ENCODE measurements at regions of chr17 and their contacts with region 1.

Region 1: DNA sequence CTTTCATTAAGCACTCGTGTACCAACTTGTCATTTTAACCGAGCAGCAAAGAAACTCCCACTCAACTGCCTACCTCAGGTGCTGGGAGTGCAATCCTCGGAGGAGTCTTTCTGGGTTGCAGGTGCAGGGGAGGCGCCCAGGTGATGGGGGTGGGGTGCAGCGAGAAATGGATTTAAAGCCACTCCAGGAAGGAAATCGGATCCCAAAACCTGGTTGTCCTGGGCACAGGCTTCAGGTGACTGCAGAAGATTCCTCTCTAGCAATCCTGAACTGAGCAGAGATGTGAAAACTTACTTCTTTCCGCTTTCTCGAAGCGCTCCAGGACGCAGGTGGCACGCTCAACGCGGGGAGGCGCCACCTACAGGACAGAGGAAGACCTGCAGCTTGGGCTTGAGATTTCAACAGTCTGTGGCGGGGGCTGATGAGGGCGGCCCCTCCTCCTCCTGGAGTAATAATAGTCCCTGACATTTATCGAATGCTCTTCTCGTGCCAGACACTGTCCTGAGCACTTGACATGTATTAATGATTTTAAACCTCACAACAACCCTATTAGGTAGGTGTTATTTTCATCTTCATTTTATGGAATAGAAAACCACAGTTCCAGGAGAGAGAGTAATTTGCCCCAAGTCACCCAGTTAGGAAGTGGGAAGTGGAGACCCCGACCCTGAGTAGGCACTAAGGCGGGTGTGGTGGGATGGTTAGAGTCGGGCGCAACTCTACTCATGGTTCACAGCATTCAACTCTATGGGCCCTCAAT is 27.2 kb upstream of the SKAP1 start:
- DNase-seq: peak; percentile 49 to 90 (median 75)
- ATAC-seq: peak; percentile 85
- H3K4me3 ChIP-seq: peak overlapping the region; percentile 21 to 28
- H3K4me3 Mint-ChIP-seq: peak overlapping the region; percentile 73
- H3K27ac ChIP-seq: no peak overlapping the region
- H3K27ac Mint-ChIP-seq: peak overlapping the region; percentile 22
- H3K4me1 ChIP-seq: peaks cover 53% of the 10 kb centered on the region
- H3K4me1 Mint-ChIP-seq: peaks cover 52% of the 10 kb centered on the region
- H3K27me3 ChIP-seq: no peaks in the 10 kb centered on the region
- H3K27me3 Mint-ChIP-seq: no peaks in the 10 kb centered on the region
- CTCF ChIP-seq: peak; percentile 94

Region 2: GRCh38 chr17:48335858-48336500 is 121.3 kb before region 1 on chr17:
- CTCF ChIA-PET with region 1: interaction called, 17 read pairs
- POLR2A ChIA-PET with region 1: interaction called, 3 read pairs
- intact Hi-C with region 1: loop called (anchors 1 to 5 kb)
- DNase-seq: peak in 2 of 9 experiments; percentile 68 to 76
- ATAC-seq: peak; percentile 67
- H3K4me3 ChIP-seq: no peak overlapping the region
- H3K4me3 Mint-ChIP-seq: no peak overlapping the region
- H3K27ac ChIP-seq: no peak overlapping the region
- H3K27ac Mint-ChIP-seq: no peak overlapping the region
- H3K4me1 ChIP-seq: no peaks in the 10 kb centered on the region
- H3K4me1 Mint-ChIP-seq: peaks cover 9% of the 10 kb centered on the region
- H3K27me3 ChIP-seq: no peaks in the 10 kb centered on the region
- H3K27me3 Mint-ChIP-seq: no peaks in the 10 kb centered on the region
- CTCF ChIP-seq: peak; percentile 65

Region 3: DNA sequence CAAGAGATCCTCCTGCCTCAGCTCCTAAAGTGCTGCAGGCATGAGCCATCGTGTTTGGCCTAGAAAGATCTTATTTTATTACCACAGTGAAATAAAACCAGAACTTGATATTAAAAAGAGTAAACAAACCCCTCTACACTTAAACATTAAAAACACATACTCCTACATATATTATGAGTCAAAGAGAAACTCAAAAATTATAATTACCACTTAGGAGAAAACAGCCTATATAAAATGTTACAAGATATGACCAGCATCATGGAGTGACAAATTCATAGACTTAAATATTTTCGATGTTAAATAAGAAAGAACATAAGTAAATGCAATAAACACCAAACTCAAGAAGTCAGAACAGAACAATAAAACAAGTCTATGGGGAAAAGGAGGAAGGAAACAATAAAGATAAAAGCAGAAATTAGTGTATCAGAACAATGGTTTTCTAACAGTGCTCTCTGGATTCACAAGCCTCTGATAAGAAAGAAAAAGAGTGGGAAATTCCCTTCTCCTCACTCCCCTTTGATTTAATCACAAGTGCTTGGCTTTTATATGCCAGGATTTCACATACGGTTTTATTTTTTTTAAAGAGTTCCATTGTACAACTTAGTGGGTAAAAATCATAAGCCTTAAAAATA is 50.2 kb before region 1 on chr17:
- CTCF ChIA-PET with region 1: interaction called, 10 read pairs
- POLR2A ChIA-PET with region 1: no interaction called
- intact Hi-C with region 1: loop called (anchors 1 to 2 kb)
- DNase-seq: peak in 1 of 9 experiments; percentile 45
- ATAC-seq: no peak
- H3K4me3 ChIP-seq: no peak overlapping the region
- H3K4me3 Mint-ChIP-seq: peak overlapping the region; percentile 32
- H3K27ac ChIP-seq: no peak overlapping the region
- H3K27ac Mint-ChIP-seq: peak overlapping the region; percentile 74
- H3K4me1 ChIP-seq: peaks cover 25% of the 10 kb centered on the region
- H3K4me1 Mint-ChIP-seq: peaks cover 62% of the 10 kb centered on the region
- H3K27me3 ChIP-seq: no peaks in the 10 kb centered on the region
- H3K27me3 Mint-ChIP-seq: no peaks in the 10 kb centered on the region
- CTCF ChIP-seq: no peak

Region 4: GRCh38 chr17:48413613-48414405 is 43.4 kb before region 1 on chr17:
- CTCF ChIA-PET with region 1: interaction called, 10 read pairs
- POLR2A ChIA-PET with region 1: interaction called, 9 read pairs
- intact Hi-C with region 1: loop called (anchors 1 to 2 kb)
- DNase-seq: peak in 2 of 9 experiments; percentile 26 to 56
- ATAC-seq: peak; percentile 63
- H3K4me3 ChIP-seq: no peak overlapping the region
- H3K4me3 Mint-ChIP-seq: peak overlapping the region; percentile 54
- H3K27ac ChIP-seq: peak overlapping the region; percentile 0 to 50
- H3K27ac Mint-ChIP-seq: peak overlapping the region; percentile 93
- H3K4me1 ChIP-seq: peaks cover 78% of the 10 kb centered on the region
- H3K4me1 Mint-ChIP-seq: peaks cover 83% of the 10 kb centered on the region
- H3K27me3 ChIP-seq: no peaks in the 10 kb centered on the region
- H3K27me3 Mint-ChIP-seq: no peaks in the 10 kb centered on the region
- CTCF ChIP-seq: no peak

Region 5: DNA sequence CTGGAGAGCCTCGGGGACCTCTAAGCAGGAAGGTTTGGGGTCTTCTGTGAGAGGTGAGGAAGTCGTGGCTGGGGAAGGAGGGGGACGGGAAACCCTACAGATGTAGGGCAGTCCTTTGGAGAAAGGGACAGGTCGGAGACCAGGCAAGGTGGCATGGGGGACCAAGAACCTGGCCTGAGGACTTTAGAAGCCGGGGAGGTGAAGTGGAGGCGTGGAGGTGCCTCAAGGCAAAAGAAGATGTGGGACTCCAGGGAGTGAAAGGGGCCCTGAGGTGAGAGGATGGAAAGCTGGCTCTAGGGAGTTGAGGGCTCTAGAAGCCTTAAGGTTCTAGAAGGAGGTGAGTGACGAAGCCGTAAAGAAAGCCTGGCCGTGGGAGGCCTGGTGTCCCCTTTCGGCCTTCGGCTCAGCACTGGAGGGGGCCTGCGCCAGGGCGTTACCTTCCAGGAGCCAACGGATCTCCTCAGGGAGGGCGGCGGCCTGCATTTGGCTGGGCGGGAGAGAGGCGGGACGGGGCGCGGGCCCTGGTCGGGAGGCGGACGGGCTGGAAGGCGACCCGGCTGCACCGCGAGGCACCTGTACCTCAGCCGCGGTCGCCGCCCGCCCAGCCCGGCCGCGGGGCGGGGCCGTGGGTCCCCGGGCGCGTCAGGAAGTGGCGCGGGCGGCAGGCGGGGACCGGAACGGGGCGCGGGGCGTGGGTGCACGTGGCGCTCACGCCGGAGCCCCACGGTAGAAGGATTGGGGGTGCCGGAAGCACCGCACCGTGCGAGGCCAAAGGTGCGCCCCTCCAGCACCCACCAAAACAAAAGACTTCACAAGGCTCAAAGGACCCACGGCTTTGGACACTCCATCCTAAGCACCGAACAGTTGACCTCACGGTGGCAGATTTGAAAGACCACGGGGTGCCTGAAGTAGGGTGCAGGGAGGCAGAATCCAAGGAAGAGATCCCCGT is 27.3 kb before region 1 on chr17 and contains the start of gene SKAP1:
- CTCF ChIA-PET with region 1: interaction called, 7 read pairs
- POLR2A ChIA-PET with region 1: interaction called, 4 read pairs
- intact Hi-C with region 1: loop called (anchors 1 to 2 kb)
- DNase-seq: peak; percentile 33 to 84 (median 66)
- ATAC-seq: peak; percentile 68
- H3K4me3 ChIP-seq: peak within 1 kb of the TSS; percentile 88 to 93
- H3K4me3 Mint-ChIP-seq: peak within 1 kb of the TSS; percentile 99
- H3K27ac ChIP-seq: peak within 1 kb of the TSS; percentile 79 to 91
- H3K27ac Mint-ChIP-seq: peak within 1 kb of the TSS; percentile 99
- H3K4me1 ChIP-seq: peaks cover 63% of the 10 kb centered on the region
- H3K4me1 Mint-ChIP-seq: peaks cover 88% of the 10 kb centered on the region
- H3K27me3 ChIP-seq: no peaks in the 10 kb centered on the region
- H3K27me3 Mint-ChIP-seq: no peaks in the 10 kb centered on the region
- CTCF ChIP-seq: no peak
- total RNA-seq, gene SKAP1: 59.9 to 62.4 TPM

Region 6: GRCh38 chr17:48441231-48441711 is 16.0 kb before region 1 on chr17:
- CTCF ChIA-PET with region 1: interaction called, 94 read pairs
- POLR2A ChIA-PET with region 1: interaction called, 63 read pairs
- intact Hi-C with region 1: loop called (anchors 1 kb)
- DNase-seq: peak in 5 of 9 experiments; percentile 35 to 92 (median 50)
- ATAC-seq: peak; percentile 67
- H3K4me3 ChIP-seq: peak overlapping the region; percentile 0 to 32
- H3K4me3 Mint-ChIP-seq: peak overlapping the region; percentile 68
- H3K27ac ChIP-seq: peak overlapping the region; percentile 58 to 85
- H3K27ac Mint-ChIP-seq: peak overlapping the region; percentile 97
- H3K4me1 ChIP-seq: peaks cover 94% of the 10 kb centered on the region
- H3K4me1 Mint-ChIP-seq: peaks cover 94% of the 10 kb centered on the region
- H3K27me3 ChIP-seq: no peaks in the 10 kb centered on the region
- H3K27me3 Mint-ChIP-seq: no peaks in the 10 kb centered on the region
- CTCF ChIP-seq: no peak

Region 7: GRCh38 chr17:48468299-48468698 is 11.0 kb after region 1 on chr17:
- CTCF ChIA-PET with region 1: interaction called, 10 read pairs
- POLR2A ChIA-PET with region 1: no interaction called
- intact Hi-C with region 1: no loop called
- DNase-seq: no peak
- ATAC-seq: no peak
- H3K4me3 ChIP-seq: no peak overlapping the region
- H3K4me3 Mint-ChIP-seq: no peak overlapping the region
- H3K27ac ChIP-seq: no peak overlapping the region
- H3K27ac Mint-ChIP-seq: no peak overlapping the region
- H3K4me1 ChIP-seq: peaks cover 16% of the 10 kb centered on the region
- H3K4me1 Mint-ChIP-seq: peaks cover 10% of the 10 kb centered on the region
- H3K27me3 ChIP-seq: no peaks in the 10 kb centered on the region
- H3K27me3 Mint-ChIP-seq: peaks cover 2% of the 10 kb centered on the region
- CTCF ChIP-seq: no peak